ENCODE measurements at regions of chr7 and their contacts with region 1.

Region 1: GRCh38 chr7:54788664-54789063 is 29.7 kb upstream of the SEC61G start:
- DNase-seq: no peak
- H3K4me3 Mint-ChIP-seq: no peak overlapping the region
- H3K27ac Mint-ChIP-seq: no peak overlapping the region
- H3K4me1 Mint-ChIP-seq: peaks cover 5% of the 10 kb centered on the region
- H3K27me3 Mint-ChIP-seq: peaks cover 8% of the 10 kb centered on the region

Region 2: GRCh38 chr7:54749200-54749599 is 39.5 kb before region 1 on chr7:
- intact Hi-C with region 1: no loop called
- DNase-seq: no peak
- H3K4me3 Mint-ChIP-seq: no peak overlapping the region
- H3K27ac Mint-ChIP-seq: no peak overlapping the region
- H3K4me1 Mint-ChIP-seq: peaks cover 6% of the 10 kb centered on the region
- H3K27me3 Mint-ChIP-seq: no peaks in the 10 kb centered on the region

Region 3: DNA sequence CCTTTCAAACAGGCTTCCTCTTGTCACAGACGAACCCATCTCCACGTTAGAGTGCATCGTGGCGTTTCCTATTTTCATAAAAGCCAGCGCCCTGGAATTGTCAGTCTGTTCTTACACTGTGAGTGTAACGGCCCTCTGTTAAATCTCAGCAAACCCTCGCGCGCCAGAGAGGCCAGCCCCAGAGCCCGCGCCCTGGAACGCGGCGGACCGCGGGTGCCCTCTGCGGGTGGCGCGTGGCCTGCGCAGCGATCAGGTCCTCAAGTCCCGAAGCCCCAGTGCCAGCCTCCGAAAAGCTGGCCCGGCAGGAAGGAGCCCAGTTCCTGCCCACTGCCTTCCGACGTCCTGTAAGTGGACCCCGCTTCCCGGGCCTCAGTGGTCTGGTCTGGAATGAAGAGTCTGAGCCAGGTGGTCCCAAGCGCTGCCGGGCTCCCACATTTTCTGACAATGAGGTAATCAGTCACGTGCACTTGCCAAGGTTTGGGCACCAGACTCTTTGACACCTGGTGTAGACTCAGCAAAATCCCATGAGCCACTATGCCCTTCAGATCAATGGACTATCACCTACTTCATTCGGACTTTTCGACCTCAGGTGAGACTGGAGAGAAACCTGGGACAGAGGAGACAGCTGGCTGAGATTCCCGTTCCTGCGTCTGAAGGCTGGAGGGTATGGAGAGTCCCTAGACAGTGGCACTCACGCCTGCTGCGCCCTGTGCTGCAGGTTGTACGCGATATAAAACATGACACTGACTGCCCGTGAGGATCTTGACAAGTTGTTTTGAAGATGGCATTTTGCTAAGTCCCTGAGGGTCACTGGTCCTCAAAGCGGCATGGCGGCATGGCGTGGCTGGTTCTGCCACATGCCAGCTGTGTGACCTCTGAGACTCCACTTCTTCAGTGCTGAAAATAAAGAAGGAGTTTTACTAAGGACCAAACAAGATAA is 467.1 kb after region 1 on chr7:
- intact Hi-C with region 1: loop called (anchors 1 kb)
- DNase-seq: peak; percentile 57
- H3K4me3 Mint-ChIP-seq: peak overlapping the region; percentile 86
- H3K27ac Mint-ChIP-seq: no peak overlapping the region
- H3K4me1 Mint-ChIP-seq: peaks cover 5% of the 10 kb centered on the region
- H3K27me3 Mint-ChIP-seq: peaks cover 43% of the 10 kb centered on the region